GM10248 (cell line): ENCODE measurements at regions of chr2 and their contacts with region 1.

Region 1: DNA sequence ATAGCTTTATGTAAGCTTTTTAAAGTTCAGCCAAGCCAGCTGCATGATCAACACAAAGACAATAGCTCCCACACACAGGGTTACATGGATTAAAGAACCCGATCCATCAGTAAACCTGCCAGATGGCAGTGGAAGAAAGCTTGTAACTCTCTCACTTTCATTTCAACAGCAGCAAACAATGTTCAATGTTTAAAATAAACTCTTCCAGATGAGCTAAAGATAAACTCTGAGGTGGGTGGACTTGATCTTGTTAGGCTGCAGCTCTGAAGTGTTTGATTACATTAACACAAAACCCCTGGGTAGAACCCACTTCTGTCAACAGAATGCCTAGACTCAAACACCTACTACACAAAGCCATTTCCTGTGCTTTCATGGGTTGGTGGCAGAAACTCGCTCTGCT is 13.9 kb downstream of the RDH14 start:
- DNase-seq: no peak
- CTCF ChIP-seq: no peak

Region 2: GRCh38 chr2:18560031-18560796 is 13.6 kb after region 1 on chr2 and contains the start of gene RDH14:
- CTCF ChIA-PET with region 1: interaction called, 11 read pairs
- POLR2A ChIA-PET with region 1: no interaction called
- DNase-seq: peak; percentile 89
- CTCF ChIP-seq: no peak

Region 3: GRCh38 chr2:18578033-18578432 is 31.5 kb after region 1 on chr2:
- CTCF ChIA-PET with region 1: no interaction called
- POLR2A ChIA-PET with region 1: no interaction called
- DNase-seq: no peak
- CTCF ChIP-seq: no peak